Naive thymus-derived CD8-positive, alpha-beta T cell (primary cell): ENCODE measurements at regions of chr2 and their contacts with region 1.

Region 1: DNA sequence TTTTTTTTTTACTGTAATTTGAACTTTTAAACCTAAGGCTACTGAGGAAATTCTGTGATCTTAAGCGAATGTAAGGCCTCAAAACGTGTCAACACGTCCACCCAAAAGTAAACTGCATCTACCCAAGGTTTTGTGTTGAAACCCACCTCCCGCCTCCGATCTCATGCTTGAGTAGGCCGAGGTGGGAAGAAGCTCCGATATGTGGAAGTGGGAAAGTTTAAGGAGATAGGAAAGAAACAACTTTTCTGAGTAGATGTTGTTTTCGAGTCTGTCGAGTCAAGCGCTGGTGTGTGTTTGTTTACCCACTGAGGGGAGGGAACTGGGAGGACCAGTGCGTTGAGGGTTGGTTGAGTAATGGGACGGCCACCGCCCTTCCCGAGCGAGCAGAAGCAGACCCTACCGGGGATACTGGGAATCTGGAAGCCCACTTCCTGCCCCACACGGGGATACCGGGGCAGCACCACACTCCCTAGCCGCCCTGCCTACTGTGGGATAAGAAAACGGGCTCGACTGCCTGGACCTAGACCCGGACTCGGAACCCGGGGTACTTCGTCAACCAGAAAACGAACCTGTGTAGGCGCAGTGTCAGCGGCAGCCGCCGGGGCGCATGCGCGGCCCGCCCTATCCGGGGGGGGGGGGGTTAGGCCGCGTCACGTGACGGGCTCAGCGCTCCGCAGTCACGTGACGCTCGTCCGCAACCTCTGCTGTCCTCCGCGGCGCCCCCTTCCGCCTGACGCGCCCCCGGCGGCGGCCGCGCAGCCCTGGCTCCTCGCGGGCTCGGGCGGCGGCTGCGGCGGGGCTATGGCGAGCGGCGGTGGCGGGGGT is at the start of gene RETREG2:
- DNase-seq: peak; percentile 69 to 91 (median 81)
- ATAC-seq: peak; percentile 51 to 55
- H3K4me3 Mint-ChIP-seq: peak within 1 kb of the TSS; percentile 90 to 98 (median 97)
- H3K27ac Mint-ChIP-seq: peak within 1 kb of the TSS; percentile 96 to 99 (median 98)
- H3K4me1 Mint-ChIP-seq: peaks cover 45 to 77% (median 75%) of the 10 kb centered on the region in 4 donors
- H3K27me3 Mint-ChIP-seq: no peaks in the 10 kb centered on the region
- polyA plus RNA-seq, gene RETREG2: 52.0 to 64.3 (median 57.6) TPM

Region 2: GRCh38 chr2:219160186-219161017 is 17.4 kb before region 1 on chr2 and contains the start of gene NHEJ1:
- POLR2A ChIA-PET with region 1: interaction called, 39 read pairs
- DNase-seq: peak; percentile 83 to 100 (median 90)
- ATAC-seq: peak; percentile 86 to 90
- H3K4me3 Mint-ChIP-seq: peak within 1 kb of the TSS; percentile 86 to 99 (median 93)
- H3K27ac Mint-ChIP-seq: peak within 1 kb of the TSS; percentile 88 to 99 (median 97)
- H3K4me1 Mint-ChIP-seq: peaks cover 16 to 35% (median 17%) of the 10 kb centered on the region in 4 donors
- H3K27me3 Mint-ChIP-seq: no peaks in the 10 kb centered on the region
- polyA plus RNA-seq, gene NHEJ1: 16.6 to 29.1 (median 23.0) TPM

Region 3: GRCh38 chr2:219218732-219219701 is 41.3 kb after region 1 on chr2 and contains the start of gene ABCB6:
- POLR2A ChIA-PET with region 1: interaction called, 674 read pairs
- DNase-seq: peak; percentile 74 to 94 (median 84)
- ATAC-seq: peak; percentile 92
- H3K4me3 Mint-ChIP-seq: peak within 1 kb of the TSS; percentile 75 to 91 (median 82)
- H3K27ac Mint-ChIP-seq: peak within 1 kb of the TSS; percentile 17 to 89 (median 82)
- H3K4me1 Mint-ChIP-seq: peaks cover 17 to 31% (median 26%) of the 10 kb centered on the region in 4 donors
- H3K27me3 Mint-ChIP-seq: no peaks in the 10 kb centered on the region
- polyA plus RNA-seq, gene ABCB6: 1.6 to 4.9 (median 1.8) TPM

Region 4: DNA sequence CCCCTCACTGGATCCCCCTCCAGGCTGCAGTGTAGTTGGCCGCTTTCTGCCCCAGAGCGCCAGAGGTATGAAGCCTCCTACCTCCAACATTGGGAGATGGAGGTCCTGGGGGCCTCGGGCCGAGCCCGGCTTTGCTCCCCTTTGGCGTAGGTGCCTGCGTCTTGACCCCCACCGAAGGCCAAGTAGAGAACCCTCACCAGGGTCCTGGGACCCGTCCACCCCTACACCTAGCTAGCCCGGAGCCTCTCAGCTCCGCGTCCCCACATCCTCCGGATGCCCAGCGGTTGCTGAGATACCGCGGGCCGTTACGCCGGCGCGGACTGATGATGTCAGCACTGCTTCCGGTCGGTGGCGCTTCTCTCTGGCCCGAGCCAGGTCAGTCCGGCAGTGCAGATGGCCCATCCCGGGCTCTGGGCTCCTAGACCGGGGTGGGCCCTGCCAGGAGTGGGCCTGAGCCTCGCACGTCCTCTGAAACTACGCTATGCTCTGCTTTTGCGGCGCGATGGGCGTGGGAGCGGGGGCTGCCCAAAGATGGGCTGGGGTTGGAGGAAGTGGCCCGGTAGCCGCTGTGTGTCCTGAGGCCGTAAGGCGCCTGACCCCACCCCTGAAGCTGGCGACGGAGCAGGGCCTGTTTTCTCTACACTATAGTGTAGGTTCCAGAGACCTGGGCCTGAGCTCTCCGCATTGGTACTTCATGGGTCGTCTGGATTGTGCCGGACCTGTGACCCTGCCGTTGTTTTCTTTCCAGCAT is 67.6 kb after region 1 on chr2 and contains the starts of genes GLB1L and STK16:
- POLR2A ChIA-PET with region 1: interaction called, 111 read pairs
- DNase-seq: peak; percentile 70 to 92 (median 85)
- ATAC-seq: peak; percentile 61 to 62
- H3K4me3 Mint-ChIP-seq: peak within 1 kb of the TSS; percentile 84 to 100 (median 96)
- H3K27ac Mint-ChIP-seq: peak within 1 kb of the TSS; percentile 94 to 99 (median 98)
- H3K4me1 Mint-ChIP-seq: peaks cover 19 to 70% (median 69%) of the 10 kb centered on the region in 4 donors
- H3K27me3 Mint-ChIP-seq: no peaks in the 10 kb centered on the region
- polyA plus RNA-seq, gene GLB1L: 0.62 to 1.8 (median 1.7) TPM
- polyA plus RNA-seq, gene STK16: 21.6 to 25.8 (median 23.7) TPM

Region 5: GRCh38 chr2:219388127-219388844 is 210.5 kb after region 1 on chr2:
- POLR2A ChIA-PET with region 1: interaction called, 13 read pairs
- DNase-seq: peak; percentile 95 to 100 (median 99)
- ATAC-seq: peak; percentile 78 to 79
- H3K4me3 Mint-ChIP-seq: peak overlapping the region; percentile 63 to 97 (median 75)
- H3K27ac Mint-ChIP-seq: peak overlapping the region; percentile 25 to 96 (median 92)
- H3K4me1 Mint-ChIP-seq: peaks cover 4 to 36% (median 22%) of the 10 kb centered on the region in 4 donors
- H3K27me3 Mint-ChIP-seq: peaks cover 0 to 1% (median 0%) of the 10 kb centered on the region in 5 donors